ENCODE measurements at regions of chr4 and their contacts with region 1.

Region 1: DNA sequence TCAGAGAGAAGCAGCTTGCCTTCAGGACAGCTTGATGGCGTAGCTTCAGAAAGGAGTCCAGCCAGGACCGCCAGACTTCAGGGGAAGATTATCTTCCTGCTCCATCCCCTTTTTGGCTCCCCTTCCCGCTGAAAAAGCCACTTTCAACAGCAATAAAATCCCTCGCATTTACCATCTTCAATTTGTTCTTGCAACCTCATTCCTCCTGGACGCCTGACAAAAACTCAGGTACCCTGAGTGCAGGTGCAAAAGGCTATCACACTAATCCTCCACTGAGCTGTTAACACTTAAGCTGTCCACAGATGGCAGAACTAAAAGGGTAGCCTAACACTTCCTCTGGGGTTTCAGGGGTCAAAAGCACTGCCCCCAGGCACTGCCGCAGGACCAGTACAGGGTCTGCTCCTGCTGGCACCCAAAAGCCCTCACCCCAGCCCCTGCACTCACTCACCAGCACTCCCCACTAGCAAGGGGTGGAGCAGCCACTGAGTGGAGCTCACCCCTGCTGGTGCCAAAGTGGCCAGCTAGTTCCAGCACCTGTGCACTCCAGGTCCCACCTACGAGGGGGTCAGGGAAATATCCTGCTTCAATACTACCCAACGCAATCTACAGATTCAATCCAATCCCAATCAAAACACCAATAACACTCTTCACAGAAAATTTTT is 145.8 kb downstream of the ADGRA3 start:
- DNase-seq: no peak
- ATAC-seq: no peak
- H3K4me3 ChIP-seq: no peak overlapping the region
- H3K27ac ChIP-seq: no peak overlapping the region
- H3K4me1 ChIP-seq: no peaks in the 10 kb centered on the region
- CTCF ChIP-seq: no peak
- EP300 ChIP-seq: no peak
- POLR2A ChIP-seq: no peak
- RAD21 ChIP-seq: no peak

Region 2: GRCh38 chr4:22323691-22324090 is 46.3 kb before region 1 on chr4:
- CTCF ChIA-PET with region 1: no interaction called
- POLR2A ChIA-PET with region 1: no interaction called
- DNase-seq: no peak
- ATAC-seq: no peak
- H3K4me3 ChIP-seq: no peak overlapping the region
- H3K27ac ChIP-seq: no peak overlapping the region
- H3K4me1 ChIP-seq: no peaks in the 10 kb centered on the region
- CTCF ChIP-seq: no peak
- EP300 ChIP-seq: no peak
- POLR2A ChIP-seq: no peak
- RAD21 ChIP-seq: no peak

Region 3: GRCh38 chr4:22389240-22389870 is 19.3 kb after region 1 on chr4:
- CTCF ChIA-PET with region 1: interaction called, 14 read pairs
- POLR2A ChIA-PET with region 1: no interaction called
- DNase-seq: peak; percentile 7 to 66
- ATAC-seq: peak; percentile 83 to 86
- H3K4me3 ChIP-seq: no peak overlapping the region
- H3K27ac ChIP-seq: no peak overlapping the region
- H3K4me1 ChIP-seq: peaks cover 10% of the 10 kb centered on the region; the same call in 2 of the 3 replicates
- CTCF ChIP-seq: peak; percentile 67
- EP300 ChIP-seq: no peak
- POLR2A ChIP-seq: no peak
- RAD21 ChIP-seq: peak; percentile 74 to 75

Measured in A549 (cell line).